Activated naive CD4-positive, alpha-beta T cell treated with anti-CD3 and anti-CD28 coated beads, Interleukin-2, amount 10 ng/mL, durations not matched to agents 7 days and 5 days (primary cell): ENCODE measurements at regions of chr5 and their contacts with region 1.

Region 1: GRCh38 chr5:157130925-157131324 is 11.7 kb downstream of the MED7 start:
- DNase-seq: no peak
- H3K4me3 Mint-ChIP-seq: no peak overlapping the region
- H3K27ac Mint-ChIP-seq: no peak overlapping the region
- H3K4me1 Mint-ChIP-seq: peaks cover 39% of the 10 kb centered on the region
- H3K27me3 Mint-ChIP-seq: no peaks in the 10 kb centered on the region

Region 2: GRCh38 chr5:156893517-156893916 is 237.4 kb before region 1 on chr5:
- CTCF ChIA-PET with region 1: interaction called, 17 read pairs
- DNase-seq: no peak
- H3K4me3 Mint-ChIP-seq: no peak overlapping the region
- H3K27ac Mint-ChIP-seq: peak overlapping the region; percentile 92
- H3K4me1 Mint-ChIP-seq: peaks cover 52% of the 10 kb centered on the region
- H3K27me3 Mint-ChIP-seq: no peaks in the 10 kb centered on the region

Region 3: DNA sequence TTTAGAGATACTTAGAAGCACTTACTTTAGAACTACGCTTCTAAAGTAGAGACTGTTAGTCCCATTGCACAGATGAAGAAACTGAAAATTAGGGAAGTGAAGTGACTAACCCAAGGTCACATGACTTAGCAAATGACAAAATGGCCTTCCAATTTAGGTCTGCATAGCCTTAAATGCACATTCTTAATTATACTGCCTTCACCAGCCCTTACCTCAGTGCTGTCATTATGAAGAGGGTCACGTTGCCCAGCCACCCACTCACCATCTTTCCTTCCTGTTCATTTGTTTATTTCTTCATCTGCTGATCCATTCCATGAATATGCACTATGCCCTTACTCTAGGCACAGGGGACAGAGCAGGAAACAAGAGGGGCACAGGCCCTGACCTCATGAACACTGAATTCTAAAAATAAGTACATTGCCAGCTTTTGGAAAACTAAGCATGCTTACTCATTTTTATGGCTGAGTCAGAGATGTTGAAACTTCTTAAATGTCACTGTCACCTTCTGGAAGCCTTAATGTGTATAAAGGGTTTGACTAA is 30.7 kb before region 1 on chr5:
- CTCF ChIA-PET with region 1: no interaction called
- DNase-seq: no peak
- H3K4me3 Mint-ChIP-seq: no peak overlapping the region
- H3K27ac Mint-ChIP-seq: peak overlapping the region; percentile 69
- H3K4me1 Mint-ChIP-seq: peaks cover 29% of the 10 kb centered on the region
- H3K27me3 Mint-ChIP-seq: no peaks in the 10 kb centered on the region

Region 4: DNA sequence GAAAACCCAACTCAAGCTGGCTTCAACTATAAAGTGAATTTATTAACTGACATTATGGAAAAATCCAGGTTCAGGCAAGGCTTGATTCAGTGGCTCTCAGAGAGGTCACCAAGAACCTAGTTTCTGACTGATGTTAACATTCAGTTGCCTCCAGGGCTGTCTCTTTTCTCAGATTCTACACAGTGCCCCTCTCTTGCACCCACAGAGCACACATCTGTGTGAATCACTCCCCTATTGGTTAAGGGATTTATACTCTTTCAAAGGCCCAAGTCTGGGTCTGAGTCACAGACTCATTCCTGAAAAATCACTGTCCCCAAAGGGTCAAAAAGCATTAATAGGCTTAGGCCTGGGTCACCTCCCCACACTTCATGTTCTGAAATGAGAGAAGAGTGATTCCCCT is 15.9 kb before region 1 on chr5:
- CTCF ChIA-PET with region 1: interaction called, 10 read pairs
- DNase-seq: no peak
- H3K4me3 Mint-ChIP-seq: no peak overlapping the region
- H3K27ac Mint-ChIP-seq: peak overlapping the region; percentile 7
- H3K4me1 Mint-ChIP-seq: peaks cover 53% of the 10 kb centered on the region
- H3K27me3 Mint-ChIP-seq: no peaks in the 10 kb centered on the region

Region 5: DNA sequence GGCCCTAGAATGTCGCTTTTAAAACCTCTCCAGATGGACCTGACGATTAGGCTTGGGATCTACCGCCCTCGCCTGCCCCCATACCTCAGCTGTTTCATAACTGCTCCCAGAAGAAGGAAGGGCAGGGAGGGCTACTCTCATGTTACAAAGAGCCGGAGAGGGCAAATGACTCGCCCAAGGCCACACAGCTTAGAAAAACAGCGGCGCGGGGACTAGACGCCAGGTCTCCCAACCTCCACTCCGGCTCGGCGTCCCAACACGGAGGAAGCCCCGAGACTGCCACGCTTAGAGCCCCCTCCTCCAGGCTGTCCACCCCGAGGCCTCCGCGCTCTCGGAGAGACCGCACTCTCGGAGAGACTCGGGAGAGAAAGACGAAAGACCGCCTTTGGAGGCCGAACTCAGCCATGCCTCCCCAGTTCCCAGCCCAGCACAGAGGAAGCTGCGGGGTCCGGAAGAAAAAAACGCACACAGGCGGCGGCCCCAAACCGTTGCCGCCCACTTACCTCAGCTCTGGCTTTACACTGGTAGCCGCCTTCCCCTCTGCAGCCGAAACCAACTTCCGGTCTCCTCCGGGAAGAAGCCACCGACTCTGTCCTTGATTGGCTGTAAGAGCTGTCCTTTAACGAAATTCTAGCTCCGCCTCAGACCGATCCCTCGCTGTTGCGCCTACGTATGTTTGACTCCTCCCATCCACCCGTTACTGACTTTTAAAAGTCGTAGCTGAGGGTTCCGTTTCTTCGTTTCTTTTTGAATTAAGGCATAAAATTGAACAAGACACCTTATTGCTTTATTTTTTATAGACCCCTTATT is 11.6 kb after region 1 on chr5 and contains the start of gene MED7:
- CTCF ChIA-PET with region 1: interaction called, 13 read pairs
- DNase-seq: peak; percentile 97
- H3K4me3 Mint-ChIP-seq: peak within 1 kb of the TSS; percentile 89
- H3K27ac Mint-ChIP-seq: peak within 1 kb of the TSS; percentile 99
- H3K4me1 Mint-ChIP-seq: peaks cover 53% of the 10 kb centered on the region
- H3K27me3 Mint-ChIP-seq: no peaks in the 10 kb centered on the region

Region 6: GRCh38 chr5:157157293-157157891 is 26.5 kb after region 1 on chr5:
- CTCF ChIA-PET with region 1: no interaction called
- DNase-seq: no peak
- H3K4me3 Mint-ChIP-seq: no peak overlapping the region
- H3K27ac Mint-ChIP-seq: no peak overlapping the region
- H3K4me1 Mint-ChIP-seq: peaks cover 77% of the 10 kb centered on the region
- H3K27me3 Mint-ChIP-seq: no peaks in the 10 kb centered on the region

Region 7: DNA sequence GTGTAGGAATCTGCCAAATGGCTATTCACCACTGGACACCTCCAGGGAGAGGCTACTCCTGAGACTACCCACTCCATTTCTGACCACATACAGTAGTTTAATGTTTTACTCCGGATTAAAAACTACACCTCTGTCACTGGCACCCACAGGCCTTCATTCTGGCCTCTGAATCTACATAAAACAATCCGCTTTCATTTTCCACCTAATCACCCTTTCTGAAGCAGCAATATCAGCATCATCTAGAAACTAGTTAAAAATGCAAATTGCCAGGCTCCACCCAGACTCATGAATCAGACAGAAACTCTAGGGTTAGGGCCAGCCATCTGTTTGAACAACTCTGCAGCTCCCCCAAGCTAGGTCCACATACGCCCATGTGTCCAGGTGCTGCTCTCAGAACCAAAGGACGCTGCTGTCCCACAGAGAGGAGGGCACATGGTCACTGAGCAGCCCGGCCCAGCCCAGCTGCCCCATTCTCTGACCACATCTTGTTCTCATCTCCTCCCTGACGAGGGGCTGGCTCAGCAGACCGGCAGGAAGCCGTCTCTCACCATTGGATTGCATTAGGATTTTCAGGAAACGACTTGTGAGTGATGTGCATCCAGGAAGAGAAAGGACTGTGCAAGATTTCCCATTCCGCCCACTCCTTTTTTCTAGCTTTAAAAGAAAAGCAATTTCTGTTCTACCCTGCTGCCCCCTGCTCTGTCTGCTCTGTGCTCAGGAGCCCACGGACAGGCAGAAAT is 410.0 kb after region 1 on chr5:
- CTCF ChIA-PET with region 1: no interaction called
- DNase-seq: peak; percentile 61
- H3K4me3 Mint-ChIP-seq: peak overlapping the region; percentile 27
- H3K27ac Mint-ChIP-seq: peak overlapping the region; percentile 88
- H3K4me1 Mint-ChIP-seq: peaks cover 87% of the 10 kb centered on the region
- H3K27me3 Mint-ChIP-seq: no peaks in the 10 kb centered on the region